Gastrocnemius medialis (tissue), 4 donors: ENCODE measurements at regions of chr14 and their contacts with region 1.

Region 1: DNA sequence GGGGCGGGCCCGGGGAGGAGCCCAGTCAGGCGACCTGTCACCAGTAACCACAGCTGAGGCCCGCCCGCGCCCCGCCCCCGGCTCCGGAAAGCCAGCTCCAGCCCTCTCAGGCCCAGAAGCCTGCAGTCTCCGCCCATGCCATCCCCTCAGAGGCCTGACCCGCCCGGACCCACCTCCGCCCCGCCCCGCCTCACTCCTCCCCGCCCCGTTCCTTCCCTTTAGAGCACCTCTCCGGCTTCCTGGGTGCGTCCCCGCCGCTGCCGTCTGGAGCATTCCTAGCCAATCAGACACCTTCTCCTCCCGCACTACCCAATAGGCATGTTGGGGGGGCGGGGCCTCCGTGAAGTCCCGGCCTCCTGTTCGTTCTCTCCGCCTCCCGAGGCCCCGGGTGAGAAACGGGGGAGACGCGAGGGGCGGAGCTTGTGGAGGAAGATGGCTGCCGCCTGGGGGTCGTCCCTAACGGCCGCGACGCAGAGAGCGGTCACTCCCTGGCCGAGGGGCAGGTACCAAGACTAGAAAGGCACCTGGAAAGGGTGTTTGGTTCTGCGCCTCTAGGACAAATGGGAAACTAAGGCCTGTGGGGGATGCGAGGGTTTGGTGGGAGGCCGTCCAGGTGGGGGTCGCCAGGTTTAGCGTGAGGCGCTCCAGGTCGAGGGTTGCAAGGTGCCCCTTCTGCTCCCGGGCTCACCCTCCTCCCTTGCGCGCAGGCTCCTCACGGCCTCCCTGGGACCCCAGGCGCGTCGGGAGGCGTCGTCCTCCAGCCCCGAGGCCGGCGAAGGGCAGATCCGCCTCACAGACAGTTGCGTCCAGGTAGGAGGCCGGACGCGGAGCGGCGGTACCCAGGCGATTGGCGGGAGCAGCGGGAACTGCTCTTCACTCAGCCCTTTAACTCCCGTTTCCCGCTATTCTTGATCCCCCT is at the start of gene ISCA2:
- DNase-seq: peak; percentile 100
- ATAC-seq: peak; percentile 94 to 95
- H3K4me3 ChIP-seq: peak within 1 kb of the TSS; percentile 91 to 97 (median 94)
- H3K27ac ChIP-seq: peak within 1 kb of the TSS; percentile 95 to 98 (median 96)
- H3K4me1 ChIP-seq: peaks cover 22 to 24% of the 10 kb centered on the region in 2 donors
- H3K27me3 ChIP-seq: no peaks in the 10 kb centered on the region
- CTCF ChIP-seq: no peak
- POLR2A ChIP-seq: peak; percentile 40 to 57
- total RNA-seq, gene ISCA2: 9.9 to 11.6 (median 11.4) TPM

Region 2: DNA sequence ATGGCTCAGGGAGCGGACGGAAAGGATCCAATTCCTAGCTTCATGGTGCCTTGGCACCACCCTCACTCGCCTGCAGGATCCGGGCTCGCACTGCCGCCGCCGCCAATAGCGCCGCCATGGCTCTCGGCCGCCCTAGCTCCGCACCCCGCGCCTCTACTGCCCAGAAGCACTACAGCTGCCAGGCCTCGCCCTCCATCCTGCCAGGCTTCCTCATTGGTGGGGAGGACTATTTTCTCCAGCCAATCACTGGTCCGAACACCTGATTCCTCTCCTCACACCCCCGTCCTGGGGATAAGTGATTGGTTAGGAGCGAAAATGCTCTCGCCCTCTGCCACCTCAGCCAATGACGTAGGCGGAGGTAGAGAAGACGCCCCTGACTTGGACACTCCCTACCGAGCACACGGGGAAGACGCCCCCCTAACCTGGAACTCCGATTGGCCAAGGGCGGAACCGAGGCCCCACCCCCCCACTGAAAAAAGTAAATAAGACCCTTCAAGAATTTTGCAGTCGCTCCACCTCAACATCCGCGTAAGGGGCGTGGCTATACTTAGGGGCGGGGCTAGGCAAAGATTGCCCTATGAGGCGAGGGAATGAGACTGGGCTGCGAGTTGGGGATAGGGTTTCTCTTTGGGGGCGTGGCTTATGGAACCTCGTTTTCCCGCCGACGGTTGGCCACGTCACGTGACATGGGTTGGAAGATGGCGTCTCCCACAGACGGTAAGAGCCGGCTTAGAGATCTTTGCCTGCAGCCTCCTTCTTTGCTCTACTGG is 409.1 kb before region 1 on chr14 and contains the starts of genes ALDH6A1 and LIN52:
- in situ Hi-C with region 1: no loop called
- intact Hi-C with region 1: loop called (anchors 2 kb)
- DNase-seq: peak; percentile 100
- ATAC-seq: peak; percentile 95 to 96
- H3K4me3 ChIP-seq: peak within 1 kb of the TSS; percentile 59 to 98 (median 84)
- H3K27ac ChIP-seq: peak within 1 kb of the TSS; percentile 88 to 96 (median 93)
- H3K4me1 ChIP-seq: peaks cover 26 to 39% of the 10 kb centered on the region in 2 donors
- H3K27me3 ChIP-seq: no peaks in the 10 kb centered on the region
- CTCF ChIP-seq: peak in 3 of 5 experiments; percentile 24 to 42 (median 27)
- POLR2A ChIP-seq: peak; percentile 95 to 96
- total RNA-seq, gene ALDH6A1: 5.9 to 26.3 (median 20.3) TPM
- total RNA-seq, gene LIN52: 3.4 to 5.6 (median 4.3) TPM

Region 3: DNA sequence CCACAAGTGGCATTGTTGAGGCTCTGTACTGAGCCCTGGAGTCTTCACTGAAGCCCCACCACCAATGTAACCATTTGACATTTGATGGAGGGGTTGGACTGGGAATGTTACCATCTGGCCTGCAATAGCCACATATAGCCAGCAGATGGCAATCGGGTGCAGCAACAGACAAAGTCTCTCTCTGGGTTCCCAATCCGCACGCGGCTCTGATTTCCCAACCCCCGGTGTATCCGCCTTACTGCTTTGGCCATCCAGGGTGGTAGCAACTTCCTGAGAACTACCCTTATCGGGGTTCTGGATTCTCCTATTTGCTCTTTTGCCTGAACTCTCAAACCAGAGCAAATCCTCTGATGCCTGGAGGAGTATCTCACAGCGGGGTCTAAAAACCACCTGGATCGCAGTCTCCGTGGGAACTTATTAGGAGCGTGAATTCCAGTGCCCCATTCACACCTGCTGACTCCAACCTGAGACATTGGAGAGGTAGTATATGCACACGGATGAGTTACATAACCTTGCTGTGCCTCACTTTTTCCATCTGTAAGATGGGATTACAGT is 131.2 kb before region 1 on chr14:
- in situ Hi-C with region 1: loop called in 1 of 4 experiments (anchors 10 kb)
- intact Hi-C with region 1: loop called (anchors 5 kb)
- DNase-seq: peak; percentile 56 to 69
- ATAC-seq: peak; percentile 83 to 94
- H3K4me3 ChIP-seq: no peak overlapping the region
- H3K27ac ChIP-seq: no peak overlapping the region
- H3K4me1 ChIP-seq: no peaks in the 10 kb centered on the region
- H3K27me3 ChIP-seq: no peaks in the 10 kb centered on the region
- CTCF ChIP-seq: peak; percentile 82 to 94 (median 88)
- POLR2A ChIP-seq: no peak

Region 4: DNA sequence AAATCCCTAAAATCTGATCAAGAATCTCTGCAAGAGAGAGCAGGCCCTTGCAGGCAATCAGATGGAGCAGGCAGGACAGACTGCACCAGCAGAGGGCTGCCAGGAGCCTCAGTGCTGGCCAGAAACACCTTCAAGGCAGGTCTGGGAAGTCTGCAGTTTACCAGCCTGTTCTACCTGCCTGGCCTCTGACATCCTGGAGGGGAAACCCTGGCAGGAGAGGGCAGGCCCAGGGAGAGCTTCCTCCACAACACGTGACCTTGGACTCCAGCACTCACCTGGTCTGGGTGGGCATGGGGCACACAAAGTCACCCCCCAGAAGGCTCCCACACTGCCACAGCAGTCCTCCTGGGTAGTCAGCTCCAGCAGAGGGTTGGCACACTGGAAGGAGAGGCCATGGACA is 56.0 kb after region 1 on chr14:
- in situ Hi-C with region 1: no loop called
- intact Hi-C with region 1: loop called (anchors 2 kb)
- DNase-seq: no peak
- ATAC-seq: no peak
- H3K4me3 ChIP-seq: no peak overlapping the region
- H3K27ac ChIP-seq: peak overlapping the region; percentile 4 to 56 (median 36)
- H3K4me1 ChIP-seq: peaks cover 18 to 28% of the 10 kb centered on the region in 2 donors
- H3K27me3 ChIP-seq: no peaks in the 10 kb centered on the region
- CTCF ChIP-seq: no peak
- POLR2A ChIP-seq: no peak

Region 5: GRCh38 chr14:74712499-74713394 is 219.1 kb after region 1 on chr14 and contains the starts of genes AREL1 and FCF1:
- in situ Hi-C with region 1: no loop called
- intact Hi-C with region 1: loop called (anchors 5 kb)
- DNase-seq: peak; percentile 79 to 82
- ATAC-seq: peak; percentile 100
- H3K4me3 ChIP-seq: peak within 1 kb of the TSS; percentile 75 to 97 (median 82)
- H3K27ac ChIP-seq: peak within 1 kb of the TSS; percentile 80 to 91 (median 87)
- H3K4me1 ChIP-seq: peaks cover 19 to 23% of the 10 kb centered on the region in 2 donors
- H3K27me3 ChIP-seq: no peaks in the 10 kb centered on the region
- CTCF ChIP-seq: no peak
- POLR2A ChIP-seq: peak; percentile 83 to 84
- total RNA-seq, gene AREL1: 14.7 to 30.1 (median 22.1) TPM
- total RNA-seq, gene FCF1: 15.1 to 22.9 (median 18.6) TPM